ENCODE measurements at regions of chr3 and their contacts with region 1.

Region 1: GRCh38 chr3:47370887-47371697 is 9.7 kb upstream of the PTPN23 start:
- DNase-seq: no peak
- ATAC-seq: peak; percentile 60
- H3K4me3 ChIP-seq: no peak overlapping the region
- H3K27ac ChIP-seq: no peak overlapping the region
- H3K4me1 ChIP-seq: no peaks in the 10 kb centered on the region
- H3K27me3 ChIP-seq: no peaks in the 10 kb centered on the region
- CTCF ChIP-seq: peak; percentile 32

Region 2: GRCh38 chr3:47239929-47240328 is 131.2 kb before region 1 on chr3:
- CTCF ChIA-PET with region 1: no interaction called
- POLR2A ChIA-PET with region 1: no interaction called
- intact Hi-C with region 1: no loop called
- DNase-seq: no peak
- ATAC-seq: no peak
- H3K4me3 ChIP-seq: no peak overlapping the region
- H3K27ac ChIP-seq: no peak overlapping the region
- H3K4me1 ChIP-seq: peaks cover 3% of the 10 kb centered on the region; the same call in 1 of the 2 replicates
- H3K27me3 ChIP-seq: no peaks in the 10 kb centered on the region
- CTCF ChIP-seq: no peak

Region 3: DNA sequence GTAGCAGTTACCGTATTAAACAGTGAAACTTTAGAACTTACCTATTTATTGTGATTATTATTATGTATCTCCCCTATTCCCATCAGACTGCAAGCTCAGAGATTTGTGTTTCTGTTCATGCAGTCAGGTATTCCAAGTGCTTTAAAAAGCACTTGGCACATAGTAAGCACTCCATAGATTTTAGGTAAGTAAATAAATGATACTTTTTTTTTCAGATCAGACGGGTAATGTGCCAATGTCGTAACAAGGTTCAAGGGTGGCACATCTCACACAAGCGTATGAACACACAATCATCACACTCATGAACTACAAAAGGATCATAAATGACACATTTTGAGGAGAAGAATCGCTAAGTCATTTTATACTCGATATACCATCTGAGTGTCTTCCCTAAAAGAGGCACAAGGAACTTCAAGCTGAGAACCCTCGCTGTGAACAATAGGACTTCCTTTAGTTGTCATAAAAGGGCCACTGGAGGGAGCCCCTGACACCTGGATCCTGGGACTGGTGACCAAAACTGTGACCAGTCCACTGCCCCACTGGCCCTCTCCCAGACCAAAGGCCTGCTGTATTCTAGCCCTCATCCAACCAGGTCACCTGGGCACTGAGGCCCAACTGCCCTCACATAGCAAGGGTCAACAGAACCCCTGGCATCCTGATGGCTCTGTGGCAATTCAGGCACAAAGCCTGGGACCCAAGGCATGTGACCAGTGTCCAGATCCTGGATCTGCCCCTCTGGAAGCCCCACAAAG is 120.6 kb before region 1 on chr3:
- CTCF ChIA-PET with region 1: no interaction called
- POLR2A ChIA-PET with region 1: no interaction called
- intact Hi-C with region 1: loop called (anchors 5 kb)
- DNase-seq: peak; percentile 61
- ATAC-seq: peak; percentile 97
- H3K4me3 ChIP-seq: no peak overlapping the region
- H3K27ac ChIP-seq: no peak overlapping the region
- H3K4me1 ChIP-seq: no peaks in the 10 kb centered on the region
- H3K27me3 ChIP-seq: no peaks in the 10 kb centered on the region
- CTCF ChIP-seq: peak; percentile 76

Region 4: DNA sequence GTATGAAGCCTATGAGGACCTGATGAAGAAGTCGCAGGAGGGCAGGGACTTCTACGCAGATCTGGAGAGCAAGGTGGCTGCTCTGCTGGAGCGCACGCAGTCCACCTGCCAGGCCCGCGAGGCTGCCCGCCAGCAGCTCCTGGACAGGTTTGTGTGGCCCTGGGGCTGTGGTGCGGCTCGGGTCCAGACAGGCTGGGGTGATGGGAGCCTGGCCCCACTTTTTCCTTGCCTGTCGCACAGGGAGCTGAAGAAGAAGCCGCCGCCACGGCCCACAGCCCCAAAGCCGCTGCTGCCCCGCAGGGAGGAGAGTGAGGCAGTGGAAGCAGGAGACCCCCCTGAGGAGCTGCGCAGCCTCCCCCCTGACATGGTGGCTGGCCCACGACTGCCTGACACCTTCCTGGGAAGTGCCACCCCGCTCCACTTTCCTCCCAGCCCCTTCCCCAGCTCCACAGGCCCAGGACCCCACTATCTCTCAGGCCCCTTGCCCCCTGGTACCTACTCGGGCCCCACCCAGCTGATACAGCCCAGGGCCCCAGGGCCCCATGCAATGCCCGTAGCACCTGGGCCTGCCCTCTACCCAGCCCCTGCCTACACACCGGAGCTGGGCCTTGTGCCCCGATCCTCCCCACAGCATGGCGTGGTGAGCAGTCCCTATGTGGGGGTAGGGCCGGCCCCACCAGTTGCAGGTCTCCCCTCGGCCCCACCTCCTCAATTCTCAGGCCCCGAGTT is 38.8 kb after region 1 on chr3:
- CTCF ChIA-PET with region 1: interaction called, 10 read pairs
- POLR2A ChIA-PET with region 1: no interaction called
- intact Hi-C with region 1: no loop called
- DNase-seq: no peak
- ATAC-seq: no peak
- H3K4me3 ChIP-seq: no peak overlapping the region
- H3K27ac ChIP-seq: no peak overlapping the region
- H3K4me1 ChIP-seq: no peaks in the 10 kb centered on the region
- H3K27me3 ChIP-seq: no peaks in the 10 kb centered on the region
- CTCF ChIP-seq: no peak

Region 5: GRCh38 chr3:47536221-47536891 is 165.3 kb after region 1 on chr3:
- CTCF ChIA-PET with region 1: no interaction called
- POLR2A ChIA-PET with region 1: no interaction called
- intact Hi-C with region 1: no loop called
- DNase-seq: no peak
- ATAC-seq: no peak
- H3K4me3 ChIP-seq: no peak overlapping the region
- H3K27ac ChIP-seq: no peak overlapping the region
- H3K4me1 ChIP-seq: no peaks in the 10 kb centered on the region
- H3K27me3 ChIP-seq: no peaks in the 10 kb centered on the region
- CTCF ChIP-seq: no peak